GM10248 (cell line): ENCODE measurements at regions of chr2 and their contacts with region 1.

Region 1: GRCh38 chr2:101113396-101114267 is 37.5 kb downstream of the TBC1D8 start:
- DNase-seq: no peak
- CTCF ChIP-seq: no peak

Region 2: DNA sequence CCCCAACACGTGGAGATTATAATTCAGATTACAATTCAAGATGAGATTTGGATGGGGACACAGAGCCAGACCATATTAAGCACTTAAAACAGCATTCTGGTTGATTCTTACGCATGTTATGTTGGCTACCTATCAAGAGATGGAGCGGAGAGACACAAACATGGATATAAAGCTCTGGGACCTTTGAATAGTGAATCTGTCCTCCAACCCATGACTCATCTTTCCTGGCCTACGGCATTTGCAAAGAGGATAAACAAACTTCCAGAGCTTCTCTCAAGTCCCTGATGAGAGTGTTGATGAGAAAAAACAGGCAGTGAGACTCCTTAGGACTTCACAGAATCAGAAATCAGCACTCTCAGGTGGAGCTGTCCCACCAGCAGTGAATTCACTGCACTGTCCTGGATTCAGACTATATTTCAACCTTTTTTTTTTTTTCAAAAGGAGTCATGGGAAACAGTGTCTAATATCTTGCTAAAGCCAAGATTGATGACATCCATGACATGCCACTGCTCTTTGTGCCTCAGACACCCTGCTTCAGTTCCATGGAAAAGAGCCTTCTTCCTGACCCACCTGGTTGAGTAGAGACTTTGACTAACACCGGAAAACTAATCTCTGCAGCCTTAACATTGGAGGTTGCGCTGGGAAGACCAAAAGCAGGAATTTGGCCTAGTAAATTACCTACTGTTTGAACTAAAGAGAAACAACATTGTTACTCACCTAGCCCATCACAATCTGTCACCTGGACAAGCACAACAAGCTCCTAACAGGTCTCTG is 355.8 kb before region 1 on chr2:
- CTCF ChIA-PET with region 1: no interaction called
- POLR2A ChIA-PET with region 1: no interaction called
- DNase-seq: no peak
- CTCF ChIP-seq: no peak

Region 3: GRCh38 chr2:101124643-101125366 is 11.2 kb after region 1 on chr2:
- CTCF ChIA-PET with region 1: interaction called, 14 read pairs
- POLR2A ChIA-PET with region 1: no interaction called
- DNase-seq: no peak
- CTCF ChIP-seq: no peak

Region 4: GRCh38 chr2:101160454-101160853 is 46.8 kb after region 1 on chr2:
- CTCF ChIA-PET with region 1: no interaction called
- POLR2A ChIA-PET with region 1: no interaction called
- DNase-seq: no peak
- CTCF ChIP-seq: no peak